Activated CD4-positive, alpha-beta memory T cell treated with anti-CD3 and anti-CD28 coated beads for 36 hours (primary cell): ENCODE measurements at regions of chr9 and their contacts with region 1.

Region 1: DNA sequence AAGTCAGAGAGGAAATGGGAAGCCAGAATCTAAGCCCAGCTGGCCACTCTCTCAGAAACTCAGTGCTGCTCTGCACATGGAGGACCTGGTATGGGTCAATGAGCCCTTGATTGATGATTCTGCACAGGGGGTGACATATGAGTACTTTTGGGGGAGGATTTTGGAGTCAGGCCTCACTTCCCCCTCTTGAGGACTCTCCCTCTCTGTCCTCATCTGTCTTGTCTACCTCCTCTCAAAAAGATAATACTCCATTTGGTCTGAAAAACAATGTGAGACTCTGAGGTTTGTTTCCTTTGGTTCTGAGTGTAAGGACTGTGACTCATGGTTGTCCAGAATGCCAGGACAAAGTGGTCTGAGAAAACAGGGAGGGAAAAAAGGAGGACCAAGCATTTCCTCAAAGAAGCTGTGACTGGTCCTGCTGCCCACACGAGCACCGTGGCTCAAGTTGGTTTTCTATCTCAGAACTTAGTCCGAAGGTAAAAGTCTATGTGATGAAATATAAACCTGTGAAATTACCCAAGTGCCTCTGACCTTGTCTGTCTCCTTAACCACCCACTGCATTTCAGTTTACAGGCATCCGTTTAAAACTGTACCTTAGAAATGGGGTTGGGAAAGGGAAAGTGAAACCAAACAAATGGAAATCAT is 11.1 kb downstream of the TTC39B start:
- DNase-seq: peak; percentile 37
- H3K4me3 Mint-ChIP-seq: peak overlapping the region; percentile 69
- H3K27ac Mint-ChIP-seq: peak overlapping the region; percentile 97
- H3K4me1 Mint-ChIP-seq: peaks cover 84% of the 10 kb centered on the region
- H3K27me3 Mint-ChIP-seq: no peaks in the 10 kb centered on the region

Region 2: GRCh38 chr9:14693206-14693861 is 602.5 kb before region 1 on chr9 and contains the start of gene ZDHHC21:
- CTCF ChIA-PET with region 1: no interaction called
- POLR2A ChIA-PET with region 1: no interaction called
- intact Hi-C with region 1: loop called (anchors 5 kb)
- DNase-seq: peak; percentile 70
- H3K4me3 Mint-ChIP-seq: peak within 1 kb of the TSS; percentile 90
- H3K27ac Mint-ChIP-seq: peak within 1 kb of the TSS; percentile 78
- H3K4me1 Mint-ChIP-seq: peaks cover 41% of the 10 kb centered on the region
- H3K27me3 Mint-ChIP-seq: peaks cover 4% of the 10 kb centered on the region
- total RNA-seq, gene ZDHHC21: 5.1 to 6.7 TPM

Region 3: DNA sequence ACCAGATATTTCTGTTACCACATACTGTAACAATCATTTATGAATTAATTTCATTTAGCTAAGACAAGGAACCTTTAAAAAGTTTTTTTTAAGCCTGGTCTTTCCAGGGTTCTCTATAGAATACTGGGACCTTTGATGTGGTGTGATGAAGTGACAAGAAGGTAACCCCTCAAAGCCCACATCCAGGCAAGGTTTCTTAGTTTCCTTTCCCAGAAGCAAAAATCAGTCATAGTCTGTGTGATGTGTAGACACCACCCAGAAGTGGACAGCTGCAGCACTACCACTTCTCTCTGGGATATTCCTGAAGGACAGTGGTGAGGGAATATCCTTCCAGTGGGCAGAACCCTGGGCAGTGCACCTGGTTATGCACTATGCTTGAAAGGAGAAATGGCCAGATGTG is 104.5 kb before region 1 on chr9:
- CTCF ChIA-PET with region 1: no interaction called
- POLR2A ChIA-PET with region 1: no interaction called
- intact Hi-C with region 1: no loop called
- DNase-seq: peak; percentile 11
- H3K4me3 Mint-ChIP-seq: no peak overlapping the region
- H3K27ac Mint-ChIP-seq: no peak overlapping the region
- H3K4me1 Mint-ChIP-seq: peaks cover 11% of the 10 kb centered on the region
- H3K27me3 Mint-ChIP-seq: no peaks in the 10 kb centered on the region

Region 4: GRCh38 chr9:15306757-15307534 is 11.1 kb after region 1 on chr9 and contains the start of gene TTC39B:
- CTCF ChIA-PET with region 1: interaction called, 13 read pairs
- POLR2A ChIA-PET with region 1: interaction called, 19 read pairs
- intact Hi-C with region 1: loop called (anchors 1 kb)
- DNase-seq: peak; percentile 89
- H3K4me3 Mint-ChIP-seq: peak within 1 kb of the TSS; percentile 99
- H3K27ac Mint-ChIP-seq: peak within 1 kb of the TSS; percentile 96
- H3K4me1 Mint-ChIP-seq: peaks cover 48% of the 10 kb centered on the region
- H3K27me3 Mint-ChIP-seq: no peaks in the 10 kb centered on the region
- total RNA-seq, gene TTC39B: 30.3 to 31.7 TPM